Caco-2 (cell line): ENCODE measurements at regions of chr3 and their contacts with region 1.

Region 1: GRCh38 chr3:45137656-45138181 is 8.5 kb downstream of the CDCP1 start:
- DNase-seq: no peak
- H3K4me3 ChIP-seq: no peak overlapping the region
- H3K4me3 Mint-ChIP-seq: no peak overlapping the region
- H3K27ac Mint-ChIP-seq: no peak overlapping the region
- H3K4me1 ChIP-seq: peaks cover 36% of the 10 kb centered on the region
- H3K4me1 Mint-ChIP-seq: peaks cover 8% of the 10 kb centered on the region
- H3K27me3 ChIP-seq: no peaks in the 10 kb centered on the region
- H3K27me3 Mint-ChIP-seq: no peaks in the 10 kb centered on the region
- CTCF ChIP-seq: no peak

Region 2: DNA sequence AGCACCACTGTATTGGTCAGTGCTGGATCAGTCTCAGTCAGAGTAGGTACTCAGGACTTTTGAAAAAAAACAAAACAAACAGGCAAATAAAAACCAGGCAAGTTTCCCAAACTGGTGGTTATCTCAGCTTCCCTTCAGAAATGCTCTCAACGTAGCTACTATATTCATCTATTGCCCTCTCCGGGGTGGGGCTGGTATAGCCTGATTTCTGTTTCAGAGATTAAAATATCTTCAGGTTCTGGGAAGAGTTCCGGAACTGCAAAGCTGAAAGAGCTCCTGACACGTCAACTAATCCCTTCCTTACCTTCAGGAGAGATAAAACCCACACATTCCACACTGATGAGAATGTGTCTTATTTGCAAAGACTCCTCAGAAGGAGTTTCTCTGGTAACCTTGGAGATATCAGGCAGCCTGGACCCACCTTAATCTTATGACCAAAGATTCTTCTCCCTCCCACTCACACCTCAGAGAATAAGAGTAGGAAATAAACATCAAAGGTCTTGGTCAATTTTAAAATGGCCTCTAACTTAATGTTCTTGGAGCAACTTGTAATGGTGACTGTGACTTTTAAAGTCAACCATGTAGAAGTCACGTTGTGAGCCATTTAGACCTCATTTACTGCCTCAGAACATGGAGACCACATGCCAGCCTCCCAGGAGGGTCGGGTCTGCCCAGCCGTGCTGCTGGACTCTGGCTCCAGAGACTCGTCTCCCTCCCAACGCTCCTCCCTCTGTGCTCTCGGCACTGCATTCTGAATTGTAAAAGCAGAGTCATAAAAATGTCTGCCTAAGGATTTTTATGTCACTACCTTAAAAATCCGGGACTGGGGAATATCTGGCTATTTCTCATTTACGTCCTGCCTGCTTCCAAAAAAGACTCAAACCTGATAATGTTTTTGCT is 45.3 kb before region 1 on chr3:
- CTCF ChIA-PET with region 1: no interaction called
- POLR2A ChIA-PET with region 1: no interaction called
- intact Hi-C with region 1: no loop called
- DNase-seq: peak; percentile 53 to 71
- H3K4me3 ChIP-seq: no peak overlapping the region
- H3K4me3 Mint-ChIP-seq: peak overlapping the region; percentile 54
- H3K27ac Mint-ChIP-seq: peak overlapping the region; percentile 94
- H3K4me1 ChIP-seq: peaks cover 29% of the 10 kb centered on the region
- H3K4me1 Mint-ChIP-seq: no peaks in the 10 kb centered on the region
- H3K27me3 ChIP-seq: no peaks in the 10 kb centered on the region
- H3K27me3 Mint-ChIP-seq: no peaks in the 10 kb centered on the region
- CTCF ChIP-seq: no peak

Region 3: GRCh38 chr3:45105855-45106671 is 31.7 kb before region 1 on chr3:
- CTCF ChIA-PET with region 1: no interaction called
- POLR2A ChIA-PET with region 1: no interaction called
- intact Hi-C with region 1: no loop called
- DNase-seq: no peak
- H3K4me3 ChIP-seq: no peak overlapping the region
- H3K4me3 Mint-ChIP-seq: no peak overlapping the region
- H3K27ac Mint-ChIP-seq: no peak overlapping the region
- H3K4me1 ChIP-seq: peaks cover 7% of the 10 kb centered on the region
- H3K4me1 Mint-ChIP-seq: peaks cover 5% of the 10 kb centered on the region
- H3K27me3 ChIP-seq: no peaks in the 10 kb centered on the region
- H3K27me3 Mint-ChIP-seq: no peaks in the 10 kb centered on the region
- CTCF ChIP-seq: no peak

Region 4: GRCh38 chr3:45176912-45177311 is 39.2 kb after region 1 on chr3:
- CTCF ChIA-PET with region 1: no interaction called
- POLR2A ChIA-PET with region 1: no interaction called
- intact Hi-C with region 1: loop called (anchors 1 kb)
- DNase-seq: no peak
- H3K4me3 ChIP-seq: no peak overlapping the region
- H3K4me3 Mint-ChIP-seq: no peak overlapping the region
- H3K27ac Mint-ChIP-seq: no peak overlapping the region
- H3K4me1 ChIP-seq: no peaks in the 10 kb centered on the region
- H3K4me1 Mint-ChIP-seq: no peaks in the 10 kb centered on the region
- H3K27me3 ChIP-seq: no peaks in the 10 kb centered on the region
- H3K27me3 Mint-ChIP-seq: no peaks in the 10 kb centered on the region
- CTCF ChIP-seq: no peak